ENCODE measurements at regions of chr11 and their contacts with region 1.

Region 1: GRCh38 chr11:60841797-60842667 is at the start of gene CCDC86:
- DNase-seq: peak; percentile 99
- H3K4me3 ChIP-seq: peak within 1 kb of the TSS; percentile 69 to 94 (median 70)
- H3K27ac ChIP-seq: peak within 1 kb of the TSS; percentile 67 to 73 (median 73)
- H3K4me1 ChIP-seq: peaks cover 0 to 43% (median 39%) of the 10 kb centered on the region in 4 donors
- H3K27me3 ChIP-seq: no peaks in the 10 kb centered on the region
- CTCF ChIP-seq: no peak
- EP300 ChIP-seq: peak in 2 of 4 donors; percentile 39 to 85
- POLR2A ChIP-seq: no peak
- total RNA-seq, gene CCDC86: 8.6 to 12.0 (median 10.8) TPM

Region 2: GRCh38 chr11:60252213-60253108 is 589.6 kb before region 1 on chr11:
- intact Hi-C with region 1: no loop called
- DNase-seq: no peak
- H3K4me3 ChIP-seq: no peak overlapping the region
- H3K27ac ChIP-seq: peak overlapping the region in 1 of 4 donors; percentile 35
- H3K4me1 ChIP-seq: no peaks in the 10 kb centered on the region
- H3K27me3 ChIP-seq: no peaks in the 10 kb centered on the region
- CTCF ChIP-seq: no peak
- EP300 ChIP-seq: peak in 1 of 4 donors; percentile 56
- POLR2A ChIP-seq: no peak

Region 3: DNA sequence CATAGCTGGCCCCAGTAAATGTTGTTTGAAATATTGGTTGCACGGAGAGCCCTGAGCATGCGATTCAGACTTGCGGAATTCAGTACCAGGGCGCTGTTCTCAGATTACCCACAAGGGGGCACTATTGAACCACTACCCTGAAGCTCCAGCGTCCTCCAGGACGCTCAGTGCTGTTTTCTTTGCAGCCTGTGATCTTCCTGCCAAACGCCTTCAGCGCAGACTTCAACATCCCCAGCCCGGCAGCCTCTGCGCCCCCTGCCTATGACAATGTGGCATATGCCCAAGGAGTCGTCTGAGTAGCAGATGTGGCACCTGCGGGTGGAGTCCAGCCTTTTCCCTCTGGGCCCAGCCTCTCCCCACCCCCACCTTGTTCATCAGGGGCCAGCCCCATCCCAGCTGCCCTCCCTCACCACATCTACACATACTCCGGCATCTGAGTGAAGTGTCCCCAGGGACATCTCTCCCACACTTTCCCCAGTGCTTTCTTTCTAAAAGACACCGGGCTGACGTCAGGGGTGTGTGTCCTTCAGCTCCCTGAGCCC is 66.5 kb before region 1 on chr11:
- intact Hi-C with region 1: loop called (anchors 5 kb)
- DNase-seq: peak; percentile 92
- H3K4me3 ChIP-seq: no peak overlapping the region
- H3K27ac ChIP-seq: no peak overlapping the region
- H3K4me1 ChIP-seq: peaks cover 0 to 11% (median 7%) of the 10 kb centered on the region in 4 donors
- H3K27me3 ChIP-seq: no peaks in the 10 kb centered on the region
- CTCF ChIP-seq: peak; percentile 53 to 89 (median 77)
- EP300 ChIP-seq: no peak
- POLR2A ChIP-seq: no peak

Region 4: GRCh38 chr11:60906132-60906972 is 64.3 kb after region 1 on chr11 and contains the start of gene PRPF19:
- intact Hi-C with region 1: loop called (anchors 2 kb)
- DNase-seq: peak; percentile 98
- H3K4me3 ChIP-seq: peak within 1 kb of the TSS; percentile 89 to 99 (median 95)
- H3K27ac ChIP-seq: peak within 1 kb of the TSS; percentile 97 to 100 (median 98)
- H3K4me1 ChIP-seq: peaks cover 0 to 29% (median 24%) of the 10 kb centered on the region in 4 donors
- H3K27me3 ChIP-seq: no peaks in the 10 kb centered on the region
- CTCF ChIP-seq: no peak
- EP300 ChIP-seq: peak in 1 of 4 donors; percentile 57
- POLR2A ChIP-seq: peak; percentile 59 to 63
- total RNA-seq, gene PRPF19: 37.1 to 52.5 (median 38.9) TPM

Region 5: DNA sequence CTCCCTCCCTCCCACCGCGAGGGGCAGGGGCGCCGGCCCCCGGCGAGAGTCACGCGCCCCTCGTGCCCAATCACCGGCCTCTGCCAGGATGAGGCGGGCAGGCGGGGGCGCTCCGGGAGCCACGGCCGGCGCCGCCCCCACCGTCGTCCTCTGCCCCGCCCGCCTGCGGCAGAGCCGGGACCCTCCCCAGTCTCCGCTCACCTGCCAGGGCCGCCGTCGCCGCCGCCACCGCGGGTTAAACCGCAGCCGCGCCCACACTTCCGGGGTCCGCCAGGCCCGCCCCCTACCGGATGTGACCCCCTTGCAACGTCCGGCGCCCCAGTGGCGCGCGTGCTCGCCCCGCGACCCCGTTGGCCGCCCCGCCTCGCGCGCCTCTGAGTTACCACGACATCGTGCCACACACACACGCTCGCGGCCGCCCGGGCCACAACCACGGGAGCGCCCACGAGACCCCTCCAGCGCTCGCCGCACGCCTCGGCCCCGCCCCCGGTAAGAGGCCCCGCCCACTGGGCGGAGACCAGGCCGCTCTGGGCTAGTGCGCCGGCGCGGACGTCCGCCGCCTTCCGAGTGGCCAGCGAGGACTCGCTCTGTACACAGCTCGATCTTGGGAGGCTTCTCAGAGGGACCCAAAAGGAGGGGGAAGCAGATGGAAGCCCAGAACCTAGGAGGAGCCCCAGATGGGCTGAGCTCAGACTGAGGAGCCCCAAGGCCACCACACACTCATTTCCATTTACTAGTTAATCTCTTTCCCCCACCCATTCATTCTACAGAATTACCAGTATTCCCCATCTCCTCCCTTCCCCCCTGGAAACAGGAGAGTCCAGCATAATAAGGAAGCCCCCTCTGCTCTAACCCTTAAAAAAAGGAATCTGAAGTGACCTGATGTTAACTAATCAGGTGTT is 319.4 kb after region 1 on chr11 and contains the start of gene VPS37C:
- intact Hi-C with region 1: loop called (anchors 5 kb)
- DNase-seq: peak; percentile 92
- H3K4me3 ChIP-seq: peak within 1 kb of the TSS; percentile 55 to 95 (median 74)
- H3K27ac ChIP-seq: peak within 1 kb of the TSS; percentile 91 to 99 (median 98)
- H3K4me1 ChIP-seq: peaks cover 0 to 43% (median 35%) of the 10 kb centered on the region in 4 donors
- H3K27me3 ChIP-seq: no peaks in the 10 kb centered on the region
- CTCF ChIP-seq: no peak
- EP300 ChIP-seq: no peak
- POLR2A ChIP-seq: peak in 1 of 2 donors; percentile 20
- total RNA-seq, gene VPS37C: 8.6 to 25.4 (median 18.5) TPM

Measured in sigmoid colon (tissue), 7 donors.